Right ventricle myocardium superior (tissue), 1 donor: ENCODE measurements at regions of chr5 and their contacts with region 1.

Region 1: DNA sequence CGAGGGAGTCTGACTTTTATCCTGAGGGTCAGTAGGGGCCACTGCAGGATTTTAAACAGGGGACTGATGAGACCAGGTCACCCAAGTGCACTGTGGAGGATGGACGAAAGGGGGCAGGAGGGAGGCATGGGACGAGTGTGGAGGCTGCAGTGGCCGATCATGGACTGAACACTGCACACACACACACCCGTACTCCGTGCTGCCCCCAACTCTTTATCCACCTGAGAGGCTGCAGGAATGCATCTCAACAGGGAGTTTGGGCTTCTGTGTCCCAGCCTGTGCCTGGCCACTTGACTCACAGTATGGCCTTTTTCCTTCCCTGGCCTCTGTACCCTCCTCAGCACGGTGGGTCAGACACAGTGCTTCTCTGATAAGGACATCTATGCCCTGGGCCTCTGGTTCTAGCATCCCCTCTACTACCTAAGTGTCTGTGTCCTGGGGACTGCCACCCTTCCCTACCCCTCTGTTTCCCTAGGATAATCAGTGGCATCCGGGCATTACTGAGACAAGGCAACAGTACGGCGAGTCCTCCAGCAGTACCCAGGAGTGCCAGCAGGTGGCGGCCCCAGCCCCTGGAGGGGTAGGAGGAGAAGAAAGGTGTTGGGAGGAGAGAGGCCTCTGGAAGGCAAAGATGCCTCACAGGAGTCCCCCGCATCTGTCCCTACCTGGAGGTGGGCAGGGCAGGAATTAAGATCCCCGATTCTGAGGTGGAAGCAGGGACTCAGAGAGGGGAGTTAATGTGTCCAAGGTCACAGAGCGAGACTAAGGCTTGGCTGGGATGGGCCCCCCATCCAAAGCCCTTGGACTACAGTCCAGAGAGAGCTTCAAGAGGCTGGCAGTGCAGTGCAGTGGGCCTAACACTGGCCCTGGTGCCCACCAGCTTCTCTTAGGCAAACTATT is 5.1 kb upstream of the CDX1 start:
- DNase-seq: peak; percentile 91
- ATAC-seq: peak; percentile 71

Region 2: DNA sequence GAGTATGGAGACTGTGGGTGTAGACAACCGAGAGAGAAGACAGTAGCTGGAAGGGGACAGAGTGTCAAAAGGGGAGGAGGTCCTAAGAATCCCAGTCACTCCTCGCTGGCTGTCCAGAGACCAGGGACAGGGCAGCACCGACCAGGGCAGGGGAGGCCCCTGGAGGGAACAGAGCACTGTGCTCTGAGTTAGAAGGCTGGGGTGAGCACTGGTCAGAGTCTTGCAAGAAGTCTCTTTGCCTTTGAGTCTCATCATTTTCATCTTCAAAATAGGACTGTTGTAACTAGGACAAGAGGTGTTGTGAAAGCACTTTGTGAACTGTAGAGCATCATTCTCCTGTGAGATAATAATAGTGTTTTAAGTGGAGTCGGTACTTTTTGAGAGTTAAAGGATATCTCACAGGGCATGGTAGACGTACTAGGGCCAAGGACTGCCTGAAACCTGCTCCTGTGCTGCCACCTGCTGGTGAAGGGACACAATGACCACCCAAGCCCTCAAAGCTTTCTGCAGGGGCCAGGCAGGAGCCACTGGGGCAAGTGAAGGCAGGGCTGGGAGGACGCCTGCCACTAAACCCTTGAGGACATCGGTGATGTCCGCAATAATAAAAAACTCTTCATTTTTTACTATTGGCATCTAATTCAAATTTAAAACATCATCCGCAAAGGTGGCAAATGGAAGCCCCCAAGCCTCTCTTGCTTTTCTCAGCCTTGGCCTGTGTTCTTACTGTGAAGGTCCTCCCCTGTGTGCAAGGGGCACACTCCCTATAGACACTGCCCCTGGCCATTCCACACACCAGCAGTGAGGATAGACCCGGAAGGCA is 56.6 kb after region 1 on chr5:
- intact Hi-C with region 1: loop called (anchors 1 kb)
- DNase-seq: peak; percentile 85
- ATAC-seq: peak; percentile 87